Mucosa of descending colon (tissue), 3 donors: ENCODE measurements at regions of chr5 and their contacts with region 1.

Region 1: DNA sequence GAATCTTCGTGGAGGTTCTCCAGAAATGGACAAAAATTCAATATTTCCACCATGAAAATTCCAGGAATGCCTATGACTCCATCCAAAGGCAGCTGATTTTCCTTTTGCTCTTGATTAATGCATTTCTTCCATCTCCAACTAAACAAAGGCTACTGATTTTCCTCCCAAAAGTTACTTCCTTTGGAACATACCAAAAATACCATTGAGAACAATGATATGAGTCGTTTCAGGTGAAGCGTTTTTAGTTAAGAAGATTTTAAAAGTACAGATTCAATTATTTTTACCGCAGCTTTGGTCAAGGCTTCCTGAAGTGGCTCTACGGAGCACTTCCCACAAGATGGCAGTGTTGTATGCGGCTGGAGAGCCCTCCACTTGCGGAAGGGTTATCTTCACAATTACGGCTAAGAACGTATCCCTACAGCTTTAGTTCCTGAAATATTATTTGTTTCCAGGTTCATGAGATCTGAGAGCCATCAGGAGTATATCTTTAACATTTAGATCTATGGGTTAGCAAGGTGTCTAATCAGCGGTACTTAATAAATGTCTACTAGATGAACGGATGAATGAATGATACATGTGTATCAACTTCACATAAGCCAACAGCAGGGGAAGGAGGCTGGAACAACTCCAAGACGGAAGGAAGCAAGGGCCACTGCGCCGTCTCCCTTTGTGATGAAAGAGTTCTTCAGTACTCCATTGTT is 35.9 kb upstream of the ARSB start:
- DNase-seq: peak in 2 of 3 donors; percentile 50 to 73
- ATAC-seq: peak; percentile 91
- H3K4me3 ChIP-seq: no peak overlapping the region
- H3K4me1 ChIP-seq: peaks cover 4% of the 10 kb centered on the region
- CTCF ChIP-seq: peak; percentile 66

Region 2: GRCh38 chr5:79133657-79134451 is 112.8 kb after region 1 on chr5:
- intact Hi-C with region 1: loop called (anchors 2 to 10 kb)
- DNase-seq: peak in 2 of 3 donors; percentile 65 to 84
- ATAC-seq: peak; percentile 86
- H3K4me3 ChIP-seq: no peak overlapping the region
- H3K4me1 ChIP-seq: peaks cover 12% of the 10 kb centered on the region
- CTCF ChIP-seq: peak; percentile 29